ENCODE measurements at regions of chr19 and their contacts with region 1.

Region 1: GRCh38 chr19:41013359-41013758 is 22.3 kb downstream of the CYP2B6 start:
- DNase-seq: no peak
- ATAC-seq: no peak
- H3K4me3 ChIP-seq: no peak overlapping the region
- H3K27ac ChIP-seq: no peak overlapping the region
- H3K4me1 ChIP-seq: no peaks in the 10 kb centered on the region
- H3K27me3 ChIP-seq: no peaks in the 10 kb centered on the region; the same call in 1 of the 2 replicates
- CTCF ChIP-seq: no peak

Region 2: GRCh38 chr19:40110570-40110969 is 902.8 kb before region 1 on chr19:
- CTCF ChIA-PET with region 1: no interaction called
- POLR2A ChIA-PET with region 1: no interaction called
- in situ Hi-C with region 1: no loop called
- intact Hi-C with region 1: no loop called
- DNase-seq: no peak
- ATAC-seq: peak; percentile 41
- H3K4me3 ChIP-seq: no peak overlapping the region
- H3K27ac ChIP-seq: no peak overlapping the region
- H3K4me1 ChIP-seq: no peaks in the 10 kb centered on the region
- H3K27me3 ChIP-seq: no peaks in the 10 kb centered on the region; the same call in 1 of the 2 replicates
- CTCF ChIP-seq: no peak

Region 3: GRCh38 chr19:40941481-40942219 is 71.7 kb before region 1 on chr19:
- CTCF ChIA-PET with region 1: no interaction called
- POLR2A ChIA-PET with region 1: interaction called, 10 read pairs
- in situ Hi-C with region 1: no loop called
- intact Hi-C with region 1: no loop called
- DNase-seq: no peak
- ATAC-seq: 0 out of 2 replicates have a peak, but pooled peaks have one; percentile 42
- H3K4me3 ChIP-seq: no peak overlapping the region
- H3K27ac ChIP-seq: no peak overlapping the region
- H3K4me1 ChIP-seq: no peaks in the 10 kb centered on the region
- H3K27me3 ChIP-seq: no peaks in the 10 kb centered on the region
- CTCF ChIP-seq: no peak

Measured in Panc1 (cell line).